GM23248 (cell line): ENCODE measurements at regions of chr19 and their contacts with region 1.

Region 1: GRCh38 chr19:19489804-19490655 is 25.3 kb downstream of the TSSK6 start:
- DNase-seq: peak; percentile 88
- H3K4me3 ChIP-seq: peak overlapping the region; percentile 59
- H3K27ac ChIP-seq: peak overlapping the region; percentile 90
- H3K4me1 ChIP-seq: peaks cover 29% of the 10 kb centered on the region
- H3K27me3 ChIP-seq: no peaks in the 10 kb centered on the region

Region 2: DNA sequence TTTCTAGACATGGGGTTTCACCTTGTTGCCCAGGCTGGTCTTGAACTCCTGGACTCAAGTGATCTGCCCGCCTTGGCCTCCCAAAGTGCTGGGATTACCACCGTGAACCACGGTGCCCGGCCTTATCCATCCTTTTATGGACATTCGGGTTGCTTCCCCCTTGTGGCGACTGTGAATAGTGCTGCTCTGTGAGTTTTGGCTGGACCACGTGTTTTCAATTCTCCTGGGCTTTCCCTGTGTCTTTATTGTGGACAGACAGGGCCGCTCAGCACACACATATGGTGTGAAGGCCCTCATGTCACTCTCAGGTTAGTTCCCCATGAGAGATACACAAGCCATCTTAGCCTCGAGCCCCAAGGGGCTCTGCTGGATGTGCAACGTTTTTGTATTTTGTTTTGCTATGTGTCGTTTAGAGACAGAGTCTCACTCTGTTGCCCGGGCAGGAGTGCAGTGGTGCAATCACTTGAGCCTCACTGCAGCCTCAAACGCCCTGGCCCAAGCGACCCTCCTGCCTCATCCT is 128.9 kb before region 1 on chr19:
- in situ Hi-C with region 1: loop called (anchors 10 kb)
- DNase-seq: peak; percentile 90
- H3K4me3 ChIP-seq: no peak overlapping the region
- H3K27ac ChIP-seq: peak overlapping the region; percentile 17; the same call in 1 of the 2 replicates
- H3K4me1 ChIP-seq: no peaks in the 10 kb centered on the region
- H3K27me3 ChIP-seq: no peaks in the 10 kb centered on the region

Region 3: GRCh38 chr19:19591133-19591825 is 101.2 kb after region 1 on chr19:
- in situ Hi-C with region 1: no loop called
- DNase-seq: peak; percentile 98
- H3K4me3 ChIP-seq: peak overlapping the region; percentile 53
- H3K27ac ChIP-seq: peak overlapping the region; percentile 90
- H3K4me1 ChIP-seq: peaks cover 23% of the 10 kb centered on the region
- H3K27me3 ChIP-seq: no peaks in the 10 kb centered on the region